Left cardiac atrium (tissue), 4 donors: ENCODE measurements at regions of chrX and their contacts with region 1.

Region 1: GRCh38 chrX:103686199-103687072 is at the start of gene MORF4L2:
- DNase-seq: peak; percentile 90
- ATAC-seq: peak; percentile 90 to 94
- total RNA-seq, gene MORF4L2: 191 to 248 TPM

Region 2: DNA sequence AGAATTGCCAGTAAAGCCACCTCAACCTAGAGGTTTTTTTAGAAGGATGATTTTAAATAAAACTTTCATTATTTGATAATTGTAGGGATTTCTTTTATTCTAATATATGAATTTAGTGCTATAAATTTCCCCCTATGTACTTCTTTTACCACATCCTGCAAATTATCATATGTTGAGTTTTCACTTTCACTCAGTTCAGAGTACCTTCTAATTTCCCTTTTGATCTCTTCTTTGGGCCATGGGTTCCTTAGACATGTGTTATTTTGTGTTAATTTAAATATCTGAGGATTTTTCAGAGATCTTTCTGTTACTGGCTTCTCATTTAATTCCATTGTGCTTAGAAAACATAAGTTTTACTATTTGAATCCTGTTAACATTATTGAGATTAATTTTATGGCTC is 381.7 kb before region 1 on chrX:
- intact Hi-C with region 1: no loop called
- DNase-seq: no peak
- ATAC-seq: no peak

Region 3: DNA sequence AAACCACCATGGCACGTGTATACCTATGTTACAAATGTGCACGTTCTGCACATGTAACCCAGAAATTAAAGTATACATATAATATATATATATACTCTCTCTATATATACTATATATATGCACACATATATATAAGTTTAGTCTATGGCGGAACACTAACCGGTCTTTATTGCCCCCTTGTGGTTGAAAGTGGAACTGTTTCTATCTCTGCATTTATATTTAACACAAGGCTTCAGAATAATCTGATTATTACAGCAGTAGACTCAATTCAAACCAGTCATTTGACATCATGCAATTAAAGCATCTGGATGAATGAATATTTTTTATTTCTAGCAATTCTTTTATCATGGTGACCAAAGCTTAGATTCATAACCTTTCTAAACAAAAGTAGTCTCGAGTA is 131.1 kb after region 1 on chrX:
- intact Hi-C with region 1: loop called in 1 of 2 experiments (anchors 5 kb)
- DNase-seq: no peak
- ATAC-seq: no peak

Region 4: DNA sequence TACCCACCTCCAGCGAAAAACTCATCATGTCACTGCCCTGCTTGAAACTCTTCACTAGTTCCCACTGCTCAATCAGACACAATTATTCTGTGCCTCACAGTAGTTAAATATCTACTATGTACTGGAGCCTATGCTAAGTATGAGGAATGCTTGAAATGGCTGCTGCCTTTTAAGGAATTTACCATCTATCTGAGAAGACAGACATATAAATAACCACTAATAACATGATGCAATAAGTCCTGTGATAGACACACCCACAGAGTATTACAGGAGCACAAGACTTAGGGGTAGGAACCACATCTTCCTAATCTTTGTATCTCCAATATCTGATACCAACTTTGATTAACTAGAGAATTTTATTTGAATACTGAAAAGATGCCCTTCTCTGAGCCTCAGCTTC is 449.2 kb after region 1 on chrX:
- intact Hi-C with region 1: no loop called
- DNase-seq: no peak
- ATAC-seq: no peak

Region 5: DNA sequence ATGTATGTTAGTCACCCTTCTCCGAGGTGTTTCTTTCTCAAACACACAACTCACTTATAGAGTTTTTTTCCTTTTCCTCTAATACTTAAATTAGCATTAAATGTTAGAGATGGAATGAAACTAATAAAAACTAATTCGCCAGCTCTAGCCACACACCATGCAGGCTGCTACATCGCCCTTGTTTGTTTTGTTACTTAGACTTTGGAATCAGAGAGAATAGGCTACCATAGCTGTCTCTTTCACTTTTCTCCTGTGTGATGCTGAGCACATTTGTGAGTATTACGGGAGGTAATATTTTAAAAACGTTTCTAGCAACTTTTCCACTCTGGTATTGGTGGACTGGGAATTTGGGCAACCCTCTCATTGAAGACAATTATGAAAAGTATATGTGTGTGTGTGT is 524.8 kb after region 1 on chrX:
- intact Hi-C with region 1: no loop called
- DNase-seq: no peak
- ATAC-seq: no peak